Gastrocnemius medialis (tissue), 4 donors: ENCODE measurements at regions of chr3 and their contacts with region 1.

Region 1: GRCh38 chr3:71006810-71007785 is 576.4 kb downstream of the FOXP1 start:
- DNase-seq: no peak
- ATAC-seq: peak; percentile 77 to 80
- H3K4me3 ChIP-seq: peak overlapping the region in 1 of 4 donors; percentile 27
- H3K27ac ChIP-seq: peak overlapping the region; percentile 48 to 69 (median 52)
- H3K4me1 ChIP-seq: peaks cover 49 to 57% of the 10 kb centered on the region in 2 donors
- H3K27me3 ChIP-seq: no peaks in the 10 kb centered on the region
- CTCF ChIP-seq: peak in 4 of 5 experiments; percentile 27 to 65 (median 45)
- POLR2A ChIP-seq: no peak

Region 2: GRCh38 chr3:71069797-71070196 is 62.7 kb after region 1 on chr3:
- in situ Hi-C with region 1: no loop called
- intact Hi-C with region 1: loop called (anchors 2 kb)
- DNase-seq: peak; percentile 15 to 35
- ATAC-seq: no peak
- H3K4me3 ChIP-seq: no peak overlapping the region
- H3K27ac ChIP-seq: no peak overlapping the region
- H3K4me1 ChIP-seq: peaks cover 20 to 26% of the 10 kb centered on the region in 2 donors
- H3K27me3 ChIP-seq: no peaks in the 10 kb centered on the region
- CTCF ChIP-seq: peak in 4 of 5 experiments; percentile 27 to 46 (median 32)
- POLR2A ChIP-seq: no peak

Region 3: GRCh38 chr3:71397046-71397445 is 389.9 kb after region 1 on chr3:
- in situ Hi-C with region 1: no loop called
- intact Hi-C with region 1: loop called (anchors 10 kb)
- DNase-seq: no peak
- ATAC-seq: peak in 1 of 2 donors; percentile 55
- H3K4me3 ChIP-seq: no peak overlapping the region
- H3K27ac ChIP-seq: no peak overlapping the region
- H3K4me1 ChIP-seq: peaks cover 5 to 7% of the 10 kb centered on the region in 2 donors
- H3K27me3 ChIP-seq: no peaks in the 10 kb centered on the region
- CTCF ChIP-seq: peak in 4 of 5 experiments; percentile 11 to 66 (median 50)
- POLR2A ChIP-seq: no peak